ENCODE measurements at regions of chr7 and their contacts with region 1.

Region 1: GRCh38 chr7:102396027-102397019 is at the start of gene PRKRIP1:
- DNase-seq: peak; percentile 95
- H3K4me3 ChIP-seq: peak within 1 kb of the TSS; percentile 67 to 97
- H3K27ac ChIP-seq: peak within 1 kb of the TSS; percentile 80 to 88
- H3K4me1 ChIP-seq: peaks cover 0 to 7% of the 10 kb centered on the region in 2 experiments; a peak in 2 of 4 replicates
- H3K27me3 ChIP-seq: no peaks in the 10 kb centered on the region
- CTCF ChIP-seq: no peak
- EP300 ChIP-seq: no peak
- RAD21 ChIP-seq: no peak
- polyA plus RNA-seq, gene PRKRIP1: 41.2 and 55.0 TPM in 2 replicates

Region 2: GRCh38 chr7:102279537-102280400 is 116.6 kb before region 1 on chr7:
- CTCF ChIA-PET with region 1: interaction called, 421 read pairs
- POLR2A ChIA-PET with region 1: interaction called, 5 read pairs
- DNase-seq: peak; percentile 98
- H3K4me3 ChIP-seq: no peak overlapping the region; a peak in 1 of 4 replicates
- H3K27ac ChIP-seq: no peak overlapping the region; a peak in 1 of 4 replicates
- H3K4me1 ChIP-seq: peaks cover 0 to 6% of the 10 kb centered on the region in 2 experiments; a peak in 1 of 4 replicates
- H3K27me3 ChIP-seq: no peaks in the 10 kb centered on the region
- CTCF ChIP-seq: peak; percentile 99
- EP300 ChIP-seq: no peak
- RAD21 ChIP-seq: peak; percentile 94

Region 3: DNA sequence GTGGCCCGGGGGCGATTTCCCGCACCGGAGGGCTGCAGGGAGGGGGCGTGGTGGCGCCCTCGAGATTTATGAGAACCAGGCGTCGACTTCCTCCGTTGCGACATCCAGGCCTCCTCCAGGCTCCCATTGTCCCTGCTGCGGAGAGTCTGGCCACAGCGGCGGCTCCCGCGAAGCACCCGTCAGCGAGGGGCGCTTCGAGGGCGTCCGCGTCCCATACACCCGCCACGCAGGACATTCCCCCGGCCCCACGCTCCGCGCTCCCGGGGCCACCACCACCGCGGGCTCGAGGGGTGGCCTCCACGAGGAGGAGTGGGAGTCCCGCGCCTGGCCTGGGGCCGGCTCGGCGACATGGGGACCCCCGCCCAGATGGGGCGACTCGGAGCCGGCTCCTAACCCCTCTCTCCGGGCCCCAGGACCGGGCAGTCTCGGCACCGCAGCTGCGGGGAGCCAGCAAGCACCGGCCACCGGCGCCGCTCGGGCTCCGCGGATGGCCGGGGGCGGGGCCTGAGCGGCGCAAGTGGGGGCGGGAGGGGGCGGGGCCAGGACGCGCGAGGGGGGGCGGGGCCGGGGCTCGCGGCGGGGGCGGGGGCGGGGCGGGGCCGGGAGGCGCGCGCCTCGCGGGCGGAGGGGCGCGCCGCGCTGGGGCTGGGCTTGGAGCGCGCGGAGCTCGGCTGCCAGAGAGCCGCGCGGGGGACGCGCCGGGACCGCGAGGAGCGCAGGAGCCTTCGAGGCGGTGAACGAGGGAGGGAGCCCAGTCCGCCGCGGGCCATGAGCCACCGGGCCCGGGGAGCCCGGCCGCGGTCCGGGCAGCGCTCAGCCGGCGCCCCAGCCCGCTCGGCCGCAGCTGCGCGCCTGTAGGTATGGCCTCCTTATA is 109.8 kb before region 1 on chr7 and contains the start of gene SH2B2:
- CTCF ChIA-PET with region 1: interaction called, 421 read pairs
- POLR2A ChIA-PET with region 1: interaction called, 19 read pairs
- DNase-seq: peak; percentile 99
- H3K4me3 ChIP-seq: peak within 1 kb of the TSS; percentile 89 to 96
- H3K27ac ChIP-seq: peak within 1 kb of the TSS; percentile 45 to 97
- H3K4me1 ChIP-seq: peaks cover 0 to 34% of the 10 kb centered on the region in 2 experiments; a peak in 1 of 4 replicates
- H3K27me3 ChIP-seq: no peaks in the 10 kb centered on the region
- CTCF ChIP-seq: peak; percentile 13; the same call in 1 of the 2 replicates
- EP300 ChIP-seq: peak in 1 of 2 experiments; percentile 56; a peak in 1 of 4 replicates
- RAD21 ChIP-seq: no peak
- polyA plus RNA-seq, gene SH2B2: 3.8 and 4.7 TPM in 2 replicates

Measured in SK-N-SH (cell line).